ENCODE measurements at regions of chr19 and their contacts with region 1.

Region 1: GRCh38 chr19:54023191-54023590 is 31.8 kb downstream of the CACNG6 start:
- DNase-seq: no peak
- H3K4me3 ChIP-seq: no peak overlapping the region
- H3K27ac ChIP-seq: peak overlapping the region; percentile 25
- H3K4me1 ChIP-seq: peaks cover 20% of the 10 kb centered on the region
- H3K27me3 ChIP-seq: no peaks in the 10 kb centered on the region
- CTCF ChIP-seq: no peak
- POLR2A ChIP-seq: no peak

Region 2: GRCh38 chr19:53849237-53849676 is 173.9 kb before region 1 on chr19:
- CTCF ChIA-PET with region 1: interaction called, 16 read pairs
- POLR2A ChIA-PET with region 1: no interaction called
- dilution Hi-C with region 1: no loop called
- intact Hi-C with region 1: no loop called
- DNase-seq: peak; percentile 90
- H3K4me3 ChIP-seq: peak overlapping the region in 1 of 3 experiments; percentile 48
- H3K27ac ChIP-seq: peak overlapping the region; percentile 95
- H3K4me1 ChIP-seq: peaks cover 11% of the 10 kb centered on the region
- H3K27me3 ChIP-seq: no peaks in the 10 kb centered on the region
- CTCF ChIP-seq: no peak
- POLR2A ChIP-seq: no peak

Region 3: GRCh38 chr19:53879140-53880081 is 143.8 kb before region 1 on chr19:
- CTCF ChIA-PET with region 1: interaction called, 11 read pairs
- POLR2A ChIA-PET with region 1: no interaction called
- dilution Hi-C with region 1: no loop called
- intact Hi-C with region 1: no loop called
- DNase-seq: peak; percentile 91
- H3K4me3 ChIP-seq: peak overlapping the region; percentile 36 to 75 (median 56)
- H3K27ac ChIP-seq: no peak overlapping the region
- H3K4me1 ChIP-seq: peaks cover 17% of the 10 kb centered on the region
- H3K27me3 ChIP-seq: peaks cover 33 to 37% of the 10 kb centered on the region in 2 experiments
- CTCF ChIP-seq: no peak
- POLR2A ChIP-seq: peak; percentile 44

Region 4: DNA sequence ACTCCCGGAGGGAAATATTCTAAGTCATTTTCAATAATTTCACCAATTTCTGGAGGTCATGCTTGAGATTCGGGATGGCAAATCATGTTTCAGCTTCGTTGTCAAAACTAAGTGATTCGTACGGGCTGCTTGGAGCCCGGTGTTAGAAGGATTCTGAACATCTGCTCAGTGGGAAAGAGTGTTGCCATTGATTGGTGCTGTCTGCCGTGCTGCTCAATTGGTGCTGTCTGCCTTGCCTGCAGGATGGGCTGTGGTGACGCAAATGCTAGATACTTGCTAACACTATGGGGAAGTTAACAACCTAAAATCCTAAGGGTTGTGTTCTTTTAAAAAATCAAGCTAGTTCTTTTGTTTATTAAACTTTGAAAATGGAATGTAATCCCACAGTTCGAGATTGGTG is 77.8 kb before region 1 on chr19:
- CTCF ChIA-PET with region 1: interaction called, 16 read pairs
- POLR2A ChIA-PET with region 1: no interaction called
- dilution Hi-C with region 1: no loop called
- intact Hi-C with region 1: no loop called
- DNase-seq: no peak
- H3K4me3 ChIP-seq: no peak overlapping the region
- H3K27ac ChIP-seq: no peak overlapping the region
- H3K4me1 ChIP-seq: no peaks in the 10 kb centered on the region
- H3K27me3 ChIP-seq: peaks cover 11 to 30% of the 10 kb centered on the region in 2 experiments
- CTCF ChIP-seq: no peak
- POLR2A ChIP-seq: no peak

Region 5: GRCh38 chr19:54011507-54012211 is 11.5 kb before region 1 on chr19:
- CTCF ChIA-PET with region 1: interaction called, 21 read pairs
- POLR2A ChIA-PET with region 1: no interaction called
- dilution Hi-C with region 1: no loop called
- intact Hi-C with region 1: loop called (anchors 1 kb)
- DNase-seq: no peak
- H3K4me3 ChIP-seq: no peak overlapping the region
- H3K27ac ChIP-seq: no peak overlapping the region
- H3K4me1 ChIP-seq: peaks cover 18% of the 10 kb centered on the region
- H3K27me3 ChIP-seq: no peaks in the 10 kb centered on the region
- CTCF ChIP-seq: no peak
- POLR2A ChIP-seq: no peak

Region 6: GRCh38 chr19:54041969-54042606 is 18.9 kb after region 1 on chr19:
- CTCF ChIA-PET with region 1: interaction called, 10 read pairs
- POLR2A ChIA-PET with region 1: no interaction called
- dilution Hi-C with region 1: no loop called
- intact Hi-C with region 1: no loop called
- DNase-seq: no peak
- H3K4me3 ChIP-seq: no peak overlapping the region
- H3K27ac ChIP-seq: no peak overlapping the region
- H3K4me1 ChIP-seq: peaks cover 7% of the 10 kb centered on the region
- H3K27me3 ChIP-seq: peaks cover 11 to 25% of the 10 kb centered on the region in 2 experiments
- CTCF ChIP-seq: no peak
- POLR2A ChIP-seq: no peak

Measured in endothelial cell of umbilical vein (primary cell).